H1 (cell line): ENCODE measurements at regions of chr3 and their contacts with region 1.

Region 1: GRCh38 chr3:27681245-27681748 is 40.8 kb downstream of the EOMES start:
- DNase-seq: no peak
- H3K4me3 ChIP-seq: peak overlapping the region in 3 of 4 experiments; percentile 23 to 42 (median 24); a peak in 4 of 8 replicates
- H3K27ac ChIP-seq: peak overlapping the region; percentile 58
- H3K4me1 ChIP-seq: peaks cover 0 to 7% (median 1%) of the 10 kb centered on the region in 4 experiments; a peak in 2 of 7 replicates
- H3K27me3 ChIP-seq: no peaks in the 10 kb centered on the region
- CTCF ChIP-seq: peak in 2 of 3 experiments; percentile 37 to 69; a peak in 2 of 4 replicates
- EP300 ChIP-seq: no peak
- POLR2A ChIP-seq: no peak
- RAD21 ChIP-seq: peak; percentile 75 to 77

Region 2: GRCh38 chr3:27467545-27467944 is 213.8 kb before region 1 on chr3:
- CTCF ChIA-PET with region 1: interaction called, 12 read pairs
- POLR2A ChIA-PET with region 1: no interaction called
- DNase-seq: no peak
- H3K4me3 ChIP-seq: no peak overlapping the region
- H3K27ac ChIP-seq: no peak overlapping the region
- H3K4me1 ChIP-seq: peaks cover 0 to 2% (median 0%) of the 10 kb centered on the region in 4 experiments; a peak in 2 of 7 replicates
- H3K27me3 ChIP-seq: no peaks in the 10 kb centered on the region
- CTCF ChIP-seq: no peak; a peak in 1 of 4 replicates
- EP300 ChIP-seq: no peak
- POLR2A ChIP-seq: no peak
- RAD21 ChIP-seq: peak; percentile 27 to 30; a peak in 3 of 4 replicates

Region 3: GRCh38 chr3:27616031-27616430 is 65.3 kb before region 1 on chr3:
- CTCF ChIA-PET with region 1: interaction called, 34 read pairs
- POLR2A ChIA-PET with region 1: no interaction called
- DNase-seq: no peak
- H3K4me3 ChIP-seq: no peak overlapping the region
- H3K27ac ChIP-seq: no peak overlapping the region
- H3K4me1 ChIP-seq: peaks cover 0 to 3% (median 0%) of the 10 kb centered on the region in 4 experiments; a peak in 1 of 7 replicates
- H3K27me3 ChIP-seq: no peaks in the 10 kb centered on the region
- CTCF ChIP-seq: no peak
- EP300 ChIP-seq: no peak
- POLR2A ChIP-seq: no peak
- RAD21 ChIP-seq: no peak

Region 4: GRCh38 chr3:27659279-27660021 is 21.8 kb before region 1 on chr3:
- CTCF ChIA-PET with region 1: interaction called, 39 read pairs
- POLR2A ChIA-PET with region 1: interaction called, 7 read pairs
- DNase-seq: peak in 1 of 2 experiments; percentile 76
- H3K4me3 ChIP-seq: no peak overlapping the region
- H3K27ac ChIP-seq: no peak overlapping the region
- H3K4me1 ChIP-seq: peaks cover 0 to 4% (median 3%) of the 10 kb centered on the region in 4 experiments; a peak in 3 of 7 replicates
- H3K27me3 ChIP-seq: no peaks in the 10 kb centered on the region
- CTCF ChIP-seq: peak; percentile 78 to 92 (median 89)
- EP300 ChIP-seq: no peak
- POLR2A ChIP-seq: no peak
- RAD21 ChIP-seq: peak; percentile 73 to 79

Region 5: DNA sequence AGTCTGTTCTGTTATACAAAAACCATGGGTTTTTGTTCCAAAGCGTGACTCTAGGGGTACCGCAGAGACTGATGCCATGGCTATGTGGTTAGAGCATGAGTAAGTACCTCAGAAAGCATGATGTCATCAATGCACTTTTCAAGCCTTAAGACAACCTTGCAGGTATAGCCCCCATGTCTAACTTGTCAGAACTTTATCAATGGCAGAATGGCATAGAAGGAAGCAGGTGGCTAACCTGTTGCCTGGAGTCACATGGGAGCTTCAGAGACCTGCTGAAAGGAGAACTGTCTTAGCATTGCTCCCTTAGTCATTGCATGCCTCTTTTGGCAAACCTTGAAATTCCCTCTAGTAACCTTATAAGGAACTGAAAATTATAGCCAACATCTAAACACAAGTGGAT is 11.7 kb before region 1 on chr3:
- CTCF ChIA-PET with region 1: interaction called, 20 read pairs
- POLR2A ChIA-PET with region 1: interaction called, 7 read pairs
- DNase-seq: no peak
- H3K4me3 ChIP-seq: no peak overlapping the region
- H3K27ac ChIP-seq: no peak overlapping the region
- H3K4me1 ChIP-seq: peaks cover 0 to 11% (median 5%) of the 10 kb centered on the region in 4 experiments; a peak in 4 of 7 replicates
- H3K27me3 ChIP-seq: no peaks in the 10 kb centered on the region
- CTCF ChIP-seq: no peak
- EP300 ChIP-seq: no peak
- POLR2A ChIP-seq: no peak
- RAD21 ChIP-seq: no peak

Region 6: GRCh38 chr3:27805282-27805681 is 124.0 kb after region 1 on chr3:
- CTCF ChIA-PET with region 1: no interaction called
- POLR2A ChIA-PET with region 1: no interaction called
- DNase-seq: no peak
- H3K4me3 ChIP-seq: no peak overlapping the region
- H3K27ac ChIP-seq: no peak overlapping the region
- H3K4me1 ChIP-seq: no peaks in the 10 kb centered on the region
- H3K27me3 ChIP-seq: no peaks in the 10 kb centered on the region
- CTCF ChIP-seq: no peak
- EP300 ChIP-seq: no peak
- POLR2A ChIP-seq: no peak
- RAD21 ChIP-seq: no peak